CD14-positive monocyte (primary cell): ENCODE measurements at regions of chr1 and their contacts with region 1.

Region 1: GRCh38 chr1:179954493-179955297 is at the start of gene CEP350:
- DNase-seq: peak; percentile 96 to 98 (median 97)
- H3K4me3 ChIP-seq: peak within 1 kb of the TSS; percentile 86 to 93 (median 88)
- H3K4me3 Mint-ChIP-seq: peak within 1 kb of the TSS; percentile 91 to 95
- H3K27ac ChIP-seq: peak within 1 kb of the TSS; percentile 97
- H3K27ac Mint-ChIP-seq: peak within 1 kb of the TSS; percentile 94 to 99 (median 98)
- H3K4me1 ChIP-seq: peaks cover 54 to 67% of the 10 kb centered on the region in 2 donors
- H3K4me1 Mint-ChIP-seq: peaks cover 61% of the 10 kb centered on the region
- H3K27me3 ChIP-seq: no peaks in the 10 kb centered on the region
- H3K27me3 Mint-ChIP-seq: no peaks in the 10 kb centered on the region
- CTCF ChIP-seq: no peak
- polyA plus RNA-seq, gene CEP350: 6.7 to 19.8 (median 9.0) TPM

Region 2: GRCh38 chr1:179558078-179558477 is 396.6 kb before region 1 on chr1:
- intact Hi-C with region 1: no loop called
- DNase-seq: no peak
- H3K4me3 ChIP-seq: no peak overlapping the region
- H3K4me3 Mint-ChIP-seq: no peak overlapping the region
- H3K27ac ChIP-seq: no peak overlapping the region
- H3K27ac Mint-ChIP-seq: no peak overlapping the region
- H3K4me1 ChIP-seq: no peaks in the 10 kb centered on the region
- H3K4me1 Mint-ChIP-seq: no peaks in the 10 kb centered on the region
- H3K27me3 ChIP-seq: no peaks in the 10 kb centered on the region
- H3K27me3 Mint-ChIP-seq: peaks cover 0 to 6% (median 0%) of the 10 kb centered on the region in 3 donors
- CTCF ChIP-seq: no peak

Region 3: GRCh38 chr1:179867807-179868330 is 86.8 kb before region 1 on chr1:
- intact Hi-C with region 1: no loop called
- DNase-seq: peak in 2 of 3 donors; percentile 41
- H3K4me3 ChIP-seq: no peak overlapping the region
- H3K4me3 Mint-ChIP-seq: no peak overlapping the region
- H3K27ac ChIP-seq: no peak overlapping the region
- H3K27ac Mint-ChIP-seq: peak overlapping the region in 4 of 7 donors; percentile 21 to 67 (median 42)
- H3K4me1 ChIP-seq: no peaks in the 10 kb centered on the region
- H3K4me1 Mint-ChIP-seq: peaks cover 16% of the 10 kb centered on the region
- H3K27me3 ChIP-seq: no peaks in the 10 kb centered on the region
- H3K27me3 Mint-ChIP-seq: peaks cover 0 to 3% (median 0%) of the 10 kb centered on the region in 3 donors
- CTCF ChIP-seq: peak; percentile 73

Region 4: DNA sequence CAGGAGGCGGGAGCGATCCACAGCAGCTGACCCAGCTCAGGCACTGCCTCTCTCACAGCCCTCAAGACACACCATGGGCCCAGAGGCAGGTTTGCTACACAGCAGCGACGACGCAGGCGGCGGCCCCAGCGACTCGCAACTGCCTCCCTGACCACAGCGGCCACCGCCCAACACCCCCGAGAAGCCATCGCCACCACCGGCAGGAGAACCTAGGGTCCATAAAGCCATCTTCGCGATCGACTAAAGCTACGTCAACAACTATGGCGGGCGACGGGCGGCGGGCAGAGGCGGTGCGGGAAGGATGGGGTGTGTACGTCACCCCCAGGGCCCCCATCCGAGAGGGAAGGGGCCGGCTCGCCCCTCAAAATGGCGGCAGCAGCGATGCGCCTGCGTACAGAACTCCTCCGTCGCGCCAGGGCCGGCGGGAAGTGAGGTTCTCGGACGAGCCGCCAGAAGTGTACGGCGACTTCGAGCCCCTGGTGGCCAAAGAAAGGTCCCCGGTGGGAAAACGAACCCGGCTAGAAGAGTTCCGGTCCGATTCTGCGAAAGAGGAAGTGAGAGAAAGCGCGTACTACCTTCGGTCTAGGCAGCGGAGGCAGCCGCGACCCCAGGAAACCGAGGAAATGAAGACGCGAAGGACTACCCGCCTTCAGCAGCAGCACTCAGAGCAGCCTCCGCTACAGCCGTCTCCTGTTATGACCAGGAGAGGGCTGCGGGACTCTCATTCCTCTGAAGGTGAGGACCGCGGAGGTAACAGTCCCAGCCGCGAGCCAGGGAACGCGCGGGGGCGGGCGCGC is 72.3 kb before region 1 on chr1 and contains the start of gene TOR1AIP1:
- intact Hi-C with region 1: loop called (anchors 2 to 5 kb)
- DNase-seq: peak; percentile 98 to 99 (median 99)
- H3K4me3 ChIP-seq: peak within 1 kb of the TSS; percentile 83 to 99 (median 86)
- H3K4me3 Mint-ChIP-seq: peak within 1 kb of the TSS; percentile 95 to 99
- H3K27ac ChIP-seq: peak within 1 kb of the TSS; percentile 99 to 100
- H3K27ac Mint-ChIP-seq: peak within 1 kb of the TSS; percentile 100
- H3K4me1 ChIP-seq: peaks cover 30 to 53% of the 10 kb centered on the region in 2 donors
- H3K4me1 Mint-ChIP-seq: peaks cover 36% of the 10 kb centered on the region
- H3K27me3 ChIP-seq: no peaks in the 10 kb centered on the region
- H3K27me3 Mint-ChIP-seq: no peaks in the 10 kb centered on the region
- CTCF ChIP-seq: peak; percentile 31
- polyA plus RNA-seq, gene TOR1AIP1: 18.8 to 114 (median 77.5) TPM

Region 5: DNA sequence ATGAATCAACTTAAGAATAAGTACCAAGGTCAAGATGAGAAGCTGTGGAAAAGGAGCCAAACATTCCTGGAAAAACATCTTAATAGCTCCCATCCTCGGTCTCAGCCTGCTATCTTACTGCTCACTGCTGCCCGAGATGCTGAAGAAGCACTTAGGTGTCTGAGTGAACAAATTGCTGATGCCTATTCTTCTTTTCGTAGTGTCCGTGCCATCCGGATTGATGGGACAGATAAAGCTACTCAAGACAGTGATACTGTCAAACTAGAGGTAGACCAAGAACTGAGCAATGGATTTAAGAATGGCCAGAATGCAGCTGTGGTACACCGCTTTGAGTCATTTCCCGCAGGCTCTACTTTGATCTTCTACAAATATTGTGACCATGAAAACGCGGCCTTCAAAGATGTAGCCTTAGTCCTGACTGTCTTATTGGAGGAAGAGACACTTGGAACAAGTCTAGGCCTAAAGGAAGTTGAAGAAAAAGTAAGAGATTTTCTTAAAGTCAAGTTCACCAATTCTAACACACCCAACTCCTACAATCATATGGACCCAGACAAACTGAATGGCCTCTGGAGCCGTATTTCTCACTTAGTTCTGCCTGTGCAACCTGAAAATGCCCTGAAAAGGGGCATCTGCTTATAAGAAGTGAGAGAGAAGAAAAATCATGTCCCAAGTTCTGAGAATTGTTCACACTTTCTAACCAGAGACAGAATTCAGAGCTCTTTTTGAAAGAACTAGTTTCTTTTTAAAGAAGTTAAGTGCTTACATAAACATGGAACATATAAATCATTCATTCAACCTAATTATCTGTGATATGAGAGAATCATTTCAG is 36.9 kb before region 1 on chr1:
- intact Hi-C with region 1: no loop called
- DNase-seq: no peak
- H3K4me3 ChIP-seq: no peak overlapping the region
- H3K4me3 Mint-ChIP-seq: no peak overlapping the region
- H3K27ac ChIP-seq: no peak overlapping the region
- H3K27ac Mint-ChIP-seq: no peak overlapping the region
- H3K4me1 ChIP-seq: no peaks in the 10 kb centered on the region
- H3K4me1 Mint-ChIP-seq: peaks cover under 1% of the 10 kb centered on the region
- H3K27me3 ChIP-seq: no peaks in the 10 kb centered on the region
- H3K27me3 Mint-ChIP-seq: peaks cover 0 to 1% (median 0%) of the 10 kb centered on the region in 3 donors
- CTCF ChIP-seq: no peak